ENCODE measurements at regions of chr5 and their contacts with region 1.

Region 1: GRCh38 chr5:134648425-134649162 is at the start of gene SEC24A:
- DNase-seq: peak; percentile 95
- H3K4me3 Mint-ChIP-seq: peak within 1 kb of the TSS; percentile 81
- H3K27ac Mint-ChIP-seq: peak within 1 kb of the TSS; percentile 99
- H3K4me1 Mint-ChIP-seq: peaks cover 22% of the 10 kb centered on the region
- H3K27me3 Mint-ChIP-seq: no peaks in the 10 kb centered on the region
- total RNA-seq, gene SEC24A: 30.8 to 31.4 TPM

Region 2: GRCh38 chr5:134004592-134005375 is 643.8 kb before region 1 on chr5 and contains the start of gene VDAC1:
- CTCF ChIA-PET with region 1: no interaction called
- POLR2A ChIA-PET with region 1: no interaction called
- intact Hi-C with region 1: loop called (anchors 1 kb)
- DNase-seq: peak; percentile 85
- H3K4me3 Mint-ChIP-seq: peak within 1 kb of the TSS; percentile 90
- H3K27ac Mint-ChIP-seq: peak within 1 kb of the TSS; percentile 97
- H3K4me1 Mint-ChIP-seq: peaks cover 37% of the 10 kb centered on the region
- H3K27me3 Mint-ChIP-seq: no peaks in the 10 kb centered on the region
- total RNA-seq, gene VDAC1: 407 to 416 TPM

Region 3: DNA sequence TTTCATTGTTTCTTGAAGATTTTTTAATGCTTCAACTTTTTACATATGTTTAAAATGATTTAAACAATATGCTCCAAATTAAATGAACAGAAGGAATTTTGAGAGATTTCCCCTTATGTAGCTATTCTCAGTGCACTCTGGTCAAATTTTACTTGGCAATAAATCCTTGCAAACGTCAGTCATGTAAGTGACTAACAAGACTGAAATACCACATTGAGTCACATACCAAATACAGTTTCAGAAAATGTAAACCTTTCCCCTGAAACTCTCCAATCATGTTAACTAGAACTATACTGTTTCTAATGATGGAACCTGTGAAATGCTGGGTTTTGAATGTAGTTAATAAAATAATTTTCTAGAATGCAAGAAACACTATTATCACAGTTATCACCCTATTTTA is 45.5 kb before region 1 on chr5:
- CTCF ChIA-PET with region 1: no interaction called
- POLR2A ChIA-PET with region 1: interaction called, 14 read pairs
- intact Hi-C with region 1: loop called (anchors 1 kb)
- DNase-seq: no peak
- H3K4me3 Mint-ChIP-seq: no peak overlapping the region
- H3K27ac Mint-ChIP-seq: peak overlapping the region; percentile 45
- H3K4me1 Mint-ChIP-seq: peaks cover 58% of the 10 kb centered on the region
- H3K27me3 Mint-ChIP-seq: no peaks in the 10 kb centered on the region

Region 4: GRCh38 chr5:134609232-134609851 is 39.3 kb before region 1 on chr5:
- CTCF ChIA-PET with region 1: no interaction called
- POLR2A ChIA-PET with region 1: interaction called, 14 read pairs
- intact Hi-C with region 1: loop called (anchors 1 kb)
- DNase-seq: peak; percentile 19
- H3K4me3 Mint-ChIP-seq: peak overlapping the region; percentile 52
- H3K27ac Mint-ChIP-seq: peak overlapping the region; percentile 97
- H3K4me1 Mint-ChIP-seq: peaks cover 54% of the 10 kb centered on the region
- H3K27me3 Mint-ChIP-seq: no peaks in the 10 kb centered on the region

Region 5: GRCh38 chr5:134637161-134637582 is 11.4 kb before region 1 on chr5:
- CTCF ChIA-PET with region 1: interaction called, 9 read pairs
- POLR2A ChIA-PET with region 1: interaction called, 6 read pairs
- intact Hi-C with region 1: loop called (anchors 1 kb)
- DNase-seq: no peak
- H3K4me3 Mint-ChIP-seq: no peak overlapping the region
- H3K27ac Mint-ChIP-seq: no peak overlapping the region
- H3K4me1 Mint-ChIP-seq: peaks cover 8% of the 10 kb centered on the region
- H3K27me3 Mint-ChIP-seq: no peaks in the 10 kb centered on the region

Region 6: DNA sequence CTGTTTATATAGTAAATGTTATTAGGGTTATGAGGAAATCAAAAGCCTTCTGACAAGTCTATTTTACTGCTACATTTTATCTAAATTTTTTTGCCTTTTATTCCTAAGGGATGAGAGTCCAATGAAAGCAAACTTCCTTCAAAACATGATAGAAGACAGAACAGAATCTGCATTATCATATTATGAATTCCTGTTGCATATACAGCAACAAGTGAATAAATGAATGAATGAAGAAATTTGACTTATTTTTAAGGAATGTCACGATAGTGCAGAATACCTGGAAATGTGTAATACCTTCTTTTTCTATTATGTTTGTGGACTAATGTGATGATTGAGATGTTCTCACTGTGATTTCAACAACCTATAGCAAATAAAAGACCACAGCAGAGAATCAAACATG is 76.3 kb after region 1 on chr5:
- CTCF ChIA-PET with region 1: no interaction called
- POLR2A ChIA-PET with region 1: no interaction called
- intact Hi-C with region 1: no loop called
- DNase-seq: no peak
- H3K4me3 Mint-ChIP-seq: no peak overlapping the region
- H3K27ac Mint-ChIP-seq: no peak overlapping the region
- H3K4me1 Mint-ChIP-seq: no peaks in the 10 kb centered on the region
- H3K27me3 Mint-ChIP-seq: no peaks in the 10 kb centered on the region

Region 7: DNA sequence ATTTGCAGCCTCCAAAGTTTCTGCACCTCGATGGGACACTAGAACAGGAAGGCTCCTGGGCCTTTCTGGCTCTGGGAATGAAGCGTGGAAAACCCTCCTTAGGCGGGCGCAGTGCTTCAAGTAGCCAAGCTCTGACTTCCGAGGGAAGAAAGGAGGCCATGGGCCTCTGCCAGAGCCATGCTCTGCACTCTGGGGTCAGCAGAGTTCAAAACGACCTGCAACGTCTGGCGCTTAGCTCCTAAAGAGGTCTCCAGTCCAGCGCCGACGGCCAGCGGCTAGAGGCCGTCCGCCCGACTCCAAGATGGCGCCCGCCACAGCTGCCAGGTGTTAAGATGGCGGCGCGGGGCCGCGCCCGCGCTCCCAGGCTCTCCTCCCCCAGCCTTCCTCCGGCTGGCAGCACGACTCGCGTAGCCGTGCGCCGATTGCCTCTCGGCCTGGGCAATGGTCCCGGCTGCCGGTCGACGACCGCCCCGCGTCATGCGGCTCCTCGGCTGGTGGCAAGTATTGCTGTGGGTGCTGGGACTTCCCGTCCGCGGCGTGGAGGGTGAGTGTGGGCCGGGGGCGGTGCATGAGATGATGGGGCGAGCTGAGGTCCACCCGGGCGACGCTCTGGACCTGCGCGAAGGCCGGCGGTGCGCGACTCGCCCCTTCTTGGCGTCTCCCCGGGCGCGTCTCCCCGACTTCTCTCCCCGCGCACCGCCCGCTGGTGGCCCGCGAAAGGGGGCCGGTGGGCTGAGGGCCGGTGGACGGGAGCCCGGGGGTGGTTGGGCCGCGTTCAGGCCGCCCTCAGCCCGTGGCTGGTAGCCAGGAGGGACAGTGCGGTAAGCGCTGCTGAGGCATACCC is 225.6 kb after region 1 on chr5 and contains the start of gene TXNDC15:
- CTCF ChIA-PET with region 1: no interaction called
- POLR2A ChIA-PET with region 1: no interaction called
- intact Hi-C with region 1: loop called (anchors 1 kb)
- DNase-seq: peak; percentile 89
- H3K4me3 Mint-ChIP-seq: peak within 1 kb of the TSS; percentile 95
- H3K27ac Mint-ChIP-seq: peak within 1 kb of the TSS; percentile 94
- H3K4me1 Mint-ChIP-seq: peaks cover 36% of the 10 kb centered on the region
- H3K27me3 Mint-ChIP-seq: no peaks in the 10 kb centered on the region
- total RNA-seq, gene TXNDC15: 29.6 to 30.9 TPM